ENCODE measurements at regions of chr13 and their contacts with region 1.

Region 1: GRCh38 chr13:27481766-27482165 is 31.4 kb upstream of the MTIF3 start:
- DNase-seq: peak; percentile 41
- H3K4me3 ChIP-seq: no peak overlapping the region
- H3K27ac ChIP-seq: no peak overlapping the region
- H3K4me1 ChIP-seq: no peaks in the 10 kb centered on the region
- H3K27me3 ChIP-seq: peaks cover 3% of the 10 kb centered on the region
- CTCF ChIP-seq: peak; percentile 85 to 88

Region 2: DNA sequence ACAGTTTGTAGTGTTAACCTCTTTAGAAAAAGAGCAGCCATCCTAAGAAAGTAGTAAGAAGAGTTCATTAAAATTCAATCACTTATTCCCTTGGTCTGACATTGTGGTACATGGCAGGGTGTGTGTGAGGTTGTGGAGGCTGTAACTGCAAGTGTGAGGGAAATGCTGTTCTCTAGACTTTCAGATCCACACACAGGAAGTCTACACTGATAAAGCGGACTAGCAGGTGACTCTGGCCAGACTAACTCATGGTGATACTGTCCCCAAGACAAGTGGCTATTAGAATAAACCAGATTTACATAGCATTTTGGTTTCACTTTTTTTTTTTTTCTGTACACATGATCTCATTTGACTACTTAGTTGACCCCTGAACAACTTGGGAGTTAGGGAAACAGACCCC is 41.4 kb before region 1 on chr13:
- CTCF ChIA-PET with region 1: no interaction called
- dilution Hi-C with region 1: no loop called
- in situ Hi-C with region 1: no loop called
- intact Hi-C with region 1: no loop called
- DNase-seq: no peak
- H3K4me3 ChIP-seq: no peak overlapping the region
- H3K27ac ChIP-seq: no peak overlapping the region
- H3K4me1 ChIP-seq: no peaks in the 10 kb centered on the region
- H3K27me3 ChIP-seq: no peaks in the 10 kb centered on the region
- CTCF ChIP-seq: no peak

Region 3: DNA sequence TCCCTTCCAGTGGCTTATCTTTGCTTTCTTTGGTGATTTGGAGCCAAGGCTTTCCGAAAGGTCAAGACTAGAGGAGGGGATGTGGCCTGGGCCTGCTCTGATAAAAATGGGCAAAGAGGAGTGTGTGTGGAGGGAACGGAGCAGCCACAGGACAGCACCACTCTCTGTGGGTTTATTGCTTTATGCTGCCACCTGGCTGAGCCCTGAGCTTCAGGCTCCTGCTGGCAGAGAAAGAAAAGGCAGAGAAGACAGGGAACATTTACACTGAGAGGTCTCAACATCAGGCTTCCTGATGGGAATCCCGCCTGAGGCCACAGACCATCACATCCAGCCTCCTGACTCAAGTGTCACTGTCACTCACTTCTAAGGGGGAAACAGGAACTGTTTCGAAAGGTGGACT is 301.3 kb after region 1 on chr13:
- CTCF ChIA-PET with region 1: no interaction called
- dilution Hi-C with region 1: no loop called
- in situ Hi-C with region 1: no loop called
- intact Hi-C with region 1: loop called (anchors 2 kb)
- DNase-seq: no peak
- H3K4me3 ChIP-seq: no peak overlapping the region
- H3K27ac ChIP-seq: no peak overlapping the region
- H3K4me1 ChIP-seq: no peaks in the 10 kb centered on the region
- H3K27me3 ChIP-seq: peaks cover 3% of the 10 kb centered on the region
- CTCF ChIP-seq: peak; percentile 12 to 68

Measured in mammary epithelial cell (primary cell).